Endothelial cell of umbilical vein (primary cell): ENCODE measurements at regions of chr15 and their contacts with region 1.

Region 1: GRCh38 chr15:75809986-75810750 is 33.1 kb upstream of the UBE2Q2 start:
- DNase-seq: peak; percentile 37
- H3K4me3 ChIP-seq: no peak overlapping the region
- H3K27ac ChIP-seq: no peak overlapping the region
- H3K4me1 ChIP-seq: no peaks in the 10 kb centered on the region
- H3K27me3 ChIP-seq: peaks cover 10 to 18% of the 10 kb centered on the region in 2 experiments
- CTCF ChIP-seq: peak; percentile 32 to 35
- POLR2A ChIP-seq: no peak

Region 2: GRCh38 chr15:74873036-74873755 is 937.0 kb before region 1 on chr15 and contains the start of gene SCAMP2:
- CTCF ChIA-PET with region 1: no interaction called
- POLR2A ChIA-PET with region 1: no interaction called
- dilution Hi-C with region 1: no loop called
- intact Hi-C with region 1: no loop called
- DNase-seq: peak; percentile 96
- H3K4me3 ChIP-seq: peak within 1 kb of the TSS; percentile 42 to 77 (median 72)
- H3K27ac ChIP-seq: peak within 1 kb of the TSS; percentile 89
- H3K4me1 ChIP-seq: peaks cover 34% of the 10 kb centered on the region
- H3K27me3 ChIP-seq: peaks cover 3% of the 10 kb centered on the region in 2 experiments
- CTCF ChIP-seq: no peak
- POLR2A ChIP-seq: peak; percentile 93
- total RNA-seq, gene SCAMP2: 61.1 and 67.3 TPM in 2 replicates

Region 3: DNA sequence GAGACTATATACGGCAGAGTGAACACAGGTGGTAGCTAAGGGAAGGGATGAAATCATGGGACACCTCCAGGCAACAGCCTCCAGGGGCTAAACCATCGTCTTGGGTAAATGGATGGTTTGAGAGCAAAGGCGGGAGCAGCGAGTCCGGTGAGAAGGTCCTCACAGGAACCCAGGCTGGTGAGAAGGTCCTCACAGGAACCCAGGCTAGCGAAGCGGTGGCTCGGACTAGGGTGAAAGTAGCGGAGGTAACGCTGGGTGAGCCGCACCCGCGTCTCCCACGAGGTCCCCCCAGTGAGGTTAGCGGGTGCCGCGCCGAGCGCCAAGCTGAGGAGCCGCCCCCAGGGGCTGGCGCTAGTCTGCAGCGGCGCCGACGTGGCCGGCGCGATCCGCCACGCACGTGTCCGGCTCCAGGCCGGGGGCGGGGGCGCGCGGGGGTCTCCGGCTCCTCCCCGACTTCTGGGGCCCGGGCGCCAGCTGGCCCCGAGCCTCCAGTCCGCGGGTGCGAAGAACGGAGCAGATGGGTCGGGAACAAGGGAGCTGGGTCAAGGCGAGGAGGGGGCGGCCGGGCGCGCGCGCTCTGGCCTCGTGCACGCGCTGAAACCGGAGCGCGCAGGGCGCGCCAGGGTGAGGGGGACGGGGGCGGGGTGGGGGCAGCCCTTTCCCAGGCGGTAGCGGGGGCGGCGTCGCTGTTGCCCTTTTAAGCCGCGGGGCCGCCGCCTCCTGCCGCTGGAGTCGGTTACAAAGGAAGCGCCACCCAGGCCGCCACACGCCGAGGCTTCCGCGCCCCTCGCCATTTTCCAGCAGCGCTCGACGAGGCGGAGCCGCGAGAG is 32.8 kb after region 1 on chr15 and contains the start of gene UBE2Q2:
- CTCF ChIA-PET with region 1: interaction called, 11 read pairs
- POLR2A ChIA-PET with region 1: no interaction called
- dilution Hi-C with region 1: no loop called
- intact Hi-C with region 1: no loop called
- DNase-seq: peak; percentile 71
- H3K4me3 ChIP-seq: peak within 1 kb of the TSS; percentile 74 to 99 (median 83)
- H3K27ac ChIP-seq: peak within 1 kb of the TSS; percentile 85
- H3K4me1 ChIP-seq: peaks cover 19% of the 10 kb centered on the region
- H3K27me3 ChIP-seq: no peaks in the 10 kb centered on the region
- CTCF ChIP-seq: no peak
- POLR2A ChIP-seq: no peak
- total RNA-seq, gene UBE2Q2: 28.5 and 32.8 TPM in 2 replicates

Region 4: GRCh38 chr15:75928680-75929608 is 118.8 kb after region 1 on chr15:
- CTCF ChIA-PET with region 1: interaction called, 80 read pairs
- POLR2A ChIA-PET with region 1: no interaction called
- dilution Hi-C with region 1: no loop called
- intact Hi-C with region 1: no loop called
- DNase-seq: no peak
- H3K4me3 ChIP-seq: no peak overlapping the region
- H3K27ac ChIP-seq: no peak overlapping the region
- H3K4me1 ChIP-seq: peaks cover 13% of the 10 kb centered on the region
- H3K27me3 ChIP-seq: no peaks in the 10 kb centered on the region
- CTCF ChIP-seq: no peak
- POLR2A ChIP-seq: no peak

Region 5: DNA sequence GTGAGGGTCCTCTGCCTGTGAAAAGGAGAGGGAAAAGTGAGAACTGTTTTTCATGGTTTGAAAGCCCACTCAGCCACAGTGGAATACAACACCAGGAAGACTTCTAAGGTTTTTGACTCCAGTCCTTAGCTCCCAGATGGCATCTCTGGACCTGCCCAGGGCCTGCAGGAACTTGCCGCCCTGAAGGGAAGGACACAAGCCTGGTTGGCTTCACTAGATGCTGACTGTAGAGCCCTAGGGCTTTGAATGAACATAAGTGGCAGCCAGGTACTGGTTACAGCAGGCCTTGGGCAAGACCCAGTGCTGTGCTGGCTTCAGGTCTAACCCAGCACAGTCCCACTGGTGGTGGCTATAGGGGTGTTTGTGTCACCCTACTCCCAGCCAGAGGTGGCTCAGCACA is 228.3 kb after region 1 on chr15:
- CTCF ChIA-PET with region 1: no interaction called
- POLR2A ChIA-PET with region 1: no interaction called
- dilution Hi-C with region 1: no loop called
- intact Hi-C with region 1: no loop called
- DNase-seq: no peak
- H3K4me3 ChIP-seq: no peak overlapping the region
- H3K27ac ChIP-seq: no peak overlapping the region
- H3K4me1 ChIP-seq: no peaks in the 10 kb centered on the region
- H3K27me3 ChIP-seq: peaks cover 5 to 6% of the 10 kb centered on the region in 2 experiments
- CTCF ChIP-seq: no peak
- POLR2A ChIP-seq: no peak

Region 6: GRCh38 chr15:76139368-76140073 is 329.4 kb after region 1 on chr15:
- CTCF ChIA-PET with region 1: interaction called, 68 read pairs
- POLR2A ChIA-PET with region 1: no interaction called
- dilution Hi-C with region 1: no loop called
- intact Hi-C with region 1: loop called (anchors 1 kb)
- DNase-seq: peak; percentile 70
- H3K4me3 ChIP-seq: peak overlapping the region in 1 of 3 experiments; percentile 0
- H3K27ac ChIP-seq: no peak overlapping the region
- H3K4me1 ChIP-seq: peaks cover 10% of the 10 kb centered on the region
- H3K27me3 ChIP-seq: peaks cover 2 to 8% of the 10 kb centered on the region in 2 experiments
- CTCF ChIP-seq: peak; percentile 88 to 94
- POLR2A ChIP-seq: no peak